Common myeloid progenitor, CD34-positive (primary cell): ENCODE measurements at regions of chr1 and their contacts with region 1.

Region 1: DNA sequence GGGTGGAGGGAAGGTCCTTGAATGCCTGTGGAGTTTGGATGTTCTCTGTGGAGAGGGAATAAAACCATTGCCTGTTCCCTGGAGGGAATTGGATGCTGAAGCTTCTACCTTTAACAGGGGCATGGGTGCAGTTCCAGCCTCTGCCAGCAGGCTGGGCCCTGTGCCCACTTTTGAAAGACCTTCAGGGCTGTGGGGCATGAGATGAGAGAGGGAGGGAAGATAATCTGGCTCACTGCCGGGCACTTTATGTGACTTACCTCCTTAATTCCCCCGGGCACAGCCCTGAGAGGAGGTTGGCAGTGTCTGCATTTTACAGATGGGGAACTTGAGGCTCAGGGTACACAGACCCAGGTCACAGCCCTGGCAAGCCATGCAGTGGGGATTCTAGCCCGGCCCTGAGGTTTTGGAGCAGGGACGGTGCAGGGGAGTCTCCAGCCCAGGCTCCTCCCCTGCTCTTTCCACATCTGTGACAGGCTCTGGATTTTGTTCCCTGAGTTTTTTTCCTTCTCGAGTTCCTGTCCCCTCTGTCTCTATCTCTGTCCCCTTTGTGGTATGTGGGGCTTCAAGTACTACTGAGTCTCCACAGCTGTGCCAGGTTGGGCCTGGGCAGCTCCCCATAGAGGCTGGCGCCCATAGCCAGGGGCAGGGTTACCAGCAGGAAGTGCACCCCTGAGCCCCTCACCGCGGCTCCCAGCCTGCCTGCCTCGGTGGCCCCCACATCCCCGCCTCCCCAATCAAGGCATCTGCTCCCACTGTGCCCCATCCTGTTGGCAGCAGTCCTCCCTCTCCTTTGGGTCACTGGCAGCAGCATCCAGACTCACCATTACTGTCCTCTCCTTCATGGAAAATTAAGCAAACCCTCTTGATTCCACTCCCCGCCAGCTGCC is 14.0 kb upstream of the THEMIS2 start:
- DNase-seq: peak; percentile 80 to 90 (median 85)
- H3K4me3 ChIP-seq: peak overlapping the region in 1 of 7 experiments; percentile 42
- H3K27ac ChIP-seq: no peak overlapping the region
- H3K4me1 ChIP-seq: peaks cover 0 to 25% (median 16%) of the 10 kb centered on the region in 4 experiments
- H3K27me3 ChIP-seq: no peaks in the 10 kb centered on the region

Region 2: DNA sequence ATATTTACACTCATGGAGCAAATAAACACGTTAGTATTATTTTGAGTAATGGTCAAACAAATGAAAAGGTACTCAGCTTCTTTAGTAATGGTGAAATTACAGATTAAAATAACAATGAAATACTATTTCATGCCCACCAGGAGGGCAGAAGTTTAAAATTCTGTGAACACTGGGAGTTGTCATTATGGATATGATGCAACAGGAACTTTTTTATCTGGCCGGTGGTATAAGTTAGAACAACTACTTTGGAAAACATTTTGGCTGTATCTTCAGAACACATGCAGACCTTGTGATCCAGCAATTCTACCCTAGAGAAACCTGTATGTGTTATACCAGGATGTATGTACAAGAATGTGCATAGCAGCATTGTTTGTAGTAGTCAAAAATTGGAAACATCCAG is 50.9 kb before region 1 on chr1:
- CTCF ChIA-PET with region 1: no interaction called
- POLR2A ChIA-PET with region 1: no interaction called
- DNase-seq: no peak
- H3K4me3 ChIP-seq: no peak overlapping the region
- H3K27ac ChIP-seq: no peak overlapping the region
- H3K4me1 ChIP-seq: no peaks in the 10 kb centered on the region
- H3K27me3 ChIP-seq: no peaks in the 10 kb centered on the region

Region 3: DNA sequence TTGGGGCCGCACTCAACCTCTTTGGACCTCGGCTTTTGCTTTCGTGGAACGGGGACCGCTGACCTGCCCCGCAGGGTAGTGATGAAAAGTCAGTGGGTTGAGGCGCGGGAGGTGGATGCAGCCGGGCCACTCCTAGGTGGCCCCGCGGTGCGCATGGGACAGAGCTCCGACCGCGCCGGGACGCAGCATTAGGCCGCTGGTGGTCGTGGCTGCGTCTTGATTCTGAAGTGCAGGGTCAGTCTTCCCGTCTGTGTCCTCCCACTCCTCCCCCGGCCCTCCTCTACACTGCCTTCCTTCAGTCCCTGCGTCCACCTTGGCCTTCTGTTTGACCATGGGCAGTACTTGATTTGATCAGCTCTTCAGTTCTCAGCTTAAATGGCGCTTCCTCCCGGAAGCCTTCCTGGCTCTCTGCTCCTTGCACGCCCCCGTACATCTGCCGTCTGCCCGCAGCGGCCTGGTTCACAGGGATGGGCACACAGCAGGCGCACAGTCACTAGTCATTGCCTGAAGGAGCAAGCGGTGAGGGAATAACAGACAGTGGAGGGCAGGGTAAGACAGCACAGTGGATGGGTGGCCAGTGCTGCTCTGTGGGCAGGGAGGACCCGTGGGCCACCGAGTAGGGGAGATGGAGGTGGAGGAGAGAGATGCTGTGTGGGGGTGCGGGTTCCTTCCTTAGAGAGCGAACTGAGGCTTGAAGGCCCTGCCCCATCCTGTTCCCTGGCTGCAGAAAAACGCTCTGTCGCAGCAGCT is 14.7 kb after region 1 on chr1:
- CTCF ChIA-PET with region 1: interaction called, 10 read pairs
- POLR2A ChIA-PET with region 1: interaction called, 5 read pairs
- DNase-seq: peak in 1 of 3 donors; percentile 54
- H3K4me3 ChIP-seq: peak overlapping the region; percentile 63 to 96 (median 91)
- H3K27ac ChIP-seq: peak overlapping the region; percentile 58 to 76
- H3K4me1 ChIP-seq: peaks cover 5 to 69% (median 64%) of the 10 kb centered on the region in 4 experiments
- H3K27me3 ChIP-seq: no peaks in the 10 kb centered on the region

Region 4: DNA sequence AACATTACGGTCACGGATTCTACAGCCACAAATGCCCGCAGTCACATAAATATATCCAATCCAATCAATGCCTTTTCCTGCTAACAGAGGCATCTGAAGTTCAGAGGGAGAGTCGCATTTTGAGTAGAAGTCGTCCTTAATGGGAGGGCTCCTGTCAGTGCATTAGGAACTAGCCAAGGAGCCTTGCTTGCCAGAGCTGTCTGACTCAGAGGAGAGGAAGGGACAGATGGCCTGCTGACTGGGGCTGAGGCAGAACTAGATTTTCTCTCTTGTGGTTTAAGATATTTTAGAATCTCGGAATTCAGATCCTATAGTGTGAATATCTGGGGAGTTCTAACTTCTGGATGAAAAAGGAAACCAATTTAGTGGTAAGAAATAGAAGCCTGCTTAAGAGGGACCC is 112.1 kb after region 1 on chr1:
- CTCF ChIA-PET with region 1: interaction called, 14 read pairs
- POLR2A ChIA-PET with region 1: no interaction called
- DNase-seq: no peak
- H3K4me3 ChIP-seq: no peak overlapping the region
- H3K27ac ChIP-seq: no peak overlapping the region
- H3K4me1 ChIP-seq: peaks cover 0 to 1% (median 0%) of the 10 kb centered on the region in 4 experiments
- H3K27me3 ChIP-seq: no peaks in the 10 kb centered on the region